Common myeloid progenitor, CD34-positive (primary cell): ENCODE measurements at regions of chr16 and their contacts with region 1.

Region 1: DNA sequence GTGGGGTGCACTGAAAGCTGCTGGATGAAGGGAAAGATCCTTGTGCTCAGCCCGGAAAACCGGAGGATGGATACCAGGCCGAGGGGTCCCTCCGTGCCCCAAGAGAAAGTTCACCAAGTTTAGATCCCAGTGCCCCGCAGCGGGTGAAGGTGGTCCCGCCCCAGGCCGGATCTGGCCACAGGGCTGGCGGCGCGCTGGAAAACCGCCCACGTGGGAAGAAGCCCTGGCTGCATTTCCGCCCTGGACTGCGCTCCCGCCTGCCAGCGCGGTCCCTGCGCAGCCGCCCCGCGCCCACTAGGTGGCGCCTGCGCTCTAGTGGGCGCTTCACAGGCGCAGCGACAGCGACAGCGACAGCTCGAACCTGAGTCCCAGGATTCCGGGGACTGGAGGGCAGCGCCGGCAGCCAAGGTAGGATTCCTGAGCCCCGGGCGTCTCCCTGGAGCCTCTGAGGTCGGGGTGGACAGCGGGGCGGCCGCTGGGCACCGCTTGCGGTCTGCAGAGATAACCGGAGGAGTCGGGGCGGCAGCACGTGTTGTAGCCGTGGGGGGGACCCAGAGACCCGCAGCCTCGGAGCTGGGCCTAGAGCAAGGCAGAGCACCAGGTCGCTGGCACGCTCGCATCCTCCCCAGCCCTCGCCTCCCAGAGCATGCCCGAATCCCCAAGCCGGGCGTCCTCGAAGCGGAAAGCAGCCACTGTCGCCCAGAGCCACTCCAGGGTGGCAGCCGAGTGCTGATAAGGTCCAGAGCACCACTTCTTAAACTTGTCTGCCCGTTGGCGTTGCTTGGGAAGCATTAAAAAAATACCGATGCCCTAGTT is at the start of gene CHD9:
- DNase-seq: peak; percentile 81 to 88 (median 88)
- H3K4me3 ChIP-seq: peak within 1 kb of the TSS; percentile 69 to 89 (median 84)
- H3K27ac ChIP-seq: peak within 1 kb of the TSS; percentile 40 to 81
- H3K4me1 ChIP-seq: peaks cover 3 to 39% (median 25%) of the 10 kb centered on the region in 4 experiments
- H3K27me3 ChIP-seq: no peaks in the 10 kb centered on the region

Region 2: GRCh38 chr16:52863000-52863399 is 191.9 kb before region 1 on chr16:
- CTCF ChIA-PET with region 1: no interaction called
- POLR2A ChIA-PET with region 1: no interaction called
- DNase-seq: no peak
- H3K4me3 ChIP-seq: no peak overlapping the region
- H3K27ac ChIP-seq: no peak overlapping the region
- H3K4me1 ChIP-seq: no peaks in the 10 kb centered on the region
- H3K27me3 ChIP-seq: no peaks in the 10 kb centered on the region

Region 3: GRCh38 chr16:53034306-53034705 is 20.6 kb before region 1 on chr16:
- CTCF ChIA-PET with region 1: no interaction called
- POLR2A ChIA-PET with region 1: no interaction called
- DNase-seq: no peak
- H3K4me3 ChIP-seq: no peak overlapping the region
- H3K27ac ChIP-seq: no peak overlapping the region
- H3K4me1 ChIP-seq: no peaks in the 10 kb centered on the region
- H3K27me3 ChIP-seq: no peaks in the 10 kb centered on the region

Region 4: DNA sequence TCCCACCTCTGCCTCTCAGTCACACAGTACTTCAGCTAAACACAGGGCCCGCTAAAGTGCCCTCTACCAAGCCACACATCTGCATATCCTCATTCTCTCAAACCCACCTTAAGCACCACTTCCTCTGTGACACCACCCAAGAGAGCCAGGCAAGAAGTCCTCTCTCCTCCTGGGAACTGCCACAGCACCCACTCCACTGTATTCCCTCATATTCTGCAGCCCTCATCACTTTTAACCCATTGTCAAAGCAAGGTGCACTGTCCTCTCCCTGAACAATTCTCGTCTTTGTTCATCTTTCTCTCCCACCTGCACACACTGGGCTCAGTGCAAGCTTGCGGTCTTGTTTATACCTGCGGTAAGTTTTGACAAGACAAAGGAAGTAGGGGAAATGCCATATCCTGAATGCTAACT is 13.6 kb after region 1 on chr16:
- CTCF ChIA-PET with region 1: interaction called, 13 read pairs
- POLR2A ChIA-PET with region 1: no interaction called
- DNase-seq: no peak
- H3K4me3 ChIP-seq: no peak overlapping the region
- H3K27ac ChIP-seq: no peak overlapping the region
- H3K4me1 ChIP-seq: peaks cover 4 to 47% (median 34%) of the 10 kb centered on the region in 4 experiments
- H3K27me3 ChIP-seq: no peaks in the 10 kb centered on the region

Region 5: DNA sequence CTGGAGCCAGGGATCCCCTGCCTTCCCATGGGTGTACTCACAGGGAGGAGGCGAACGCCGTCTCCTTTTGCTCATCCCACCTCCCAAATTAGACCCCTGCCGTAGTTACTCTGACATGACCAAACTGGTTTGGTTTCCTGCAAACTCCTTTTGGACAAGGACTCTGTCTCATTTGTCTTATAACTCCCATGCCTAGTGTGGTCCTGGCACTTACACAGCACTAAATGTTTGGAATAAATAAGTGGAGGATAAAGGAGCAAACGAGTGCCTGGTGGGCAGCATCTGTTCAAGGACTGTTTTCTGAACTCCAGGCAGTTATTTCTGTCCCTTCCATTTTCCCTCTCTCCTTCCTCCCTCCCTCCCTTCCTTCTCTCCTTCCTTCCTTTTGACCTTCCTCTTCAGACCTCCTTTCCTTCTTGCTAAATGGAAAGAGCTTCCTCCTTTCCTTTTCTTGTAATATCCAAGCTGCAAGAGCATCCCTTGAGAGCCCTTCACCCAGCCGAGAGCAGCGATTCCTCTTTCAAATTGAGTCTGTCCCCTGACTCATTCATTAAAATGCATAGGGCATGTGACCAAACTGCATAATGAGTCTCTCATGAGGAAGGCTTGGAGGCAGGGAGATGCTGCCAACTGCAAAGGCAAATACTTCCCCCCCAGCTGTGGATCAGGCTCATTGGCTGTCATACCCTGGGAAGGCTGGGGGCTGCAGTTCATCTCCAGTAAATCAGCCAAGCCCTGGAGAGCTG is 36.8 kb after region 1 on chr16:
- CTCF ChIA-PET with region 1: interaction called, 73 read pairs
- POLR2A ChIA-PET with region 1: interaction called, 7 read pairs
- DNase-seq: peak; percentile 33 to 82 (median 72)
- H3K4me3 ChIP-seq: peak overlapping the region in 3 of 7 experiments; percentile 44 to 63 (median 46)
- H3K27ac ChIP-seq: no peak overlapping the region
- H3K4me1 ChIP-seq: peaks cover 22 to 54% (median 47%) of the 10 kb centered on the region in 4 experiments
- H3K27me3 ChIP-seq: no peaks in the 10 kb centered on the region

Region 6: GRCh38 chr16:53130159-53131049 is 75.5 kb after region 1 on chr16:
- CTCF ChIA-PET with region 1: interaction called, 24 read pairs
- POLR2A ChIA-PET with region 1: interaction called, 3 read pairs
- DNase-seq: peak; percentile 95 to 98 (median 97)
- H3K4me3 ChIP-seq: peak overlapping the region; percentile 70 to 94 (median 89)
- H3K27ac ChIP-seq: peak overlapping the region; percentile 68 to 87
- H3K4me1 ChIP-seq: peaks cover 3 to 16% (median 12%) of the 10 kb centered on the region in 4 experiments
- H3K27me3 ChIP-seq: no peaks in the 10 kb centered on the region

Region 7: GRCh38 chr16:53207810-53208752 is 153.2 kb after region 1 on chr16:
- CTCF ChIA-PET with region 1: interaction called, 51 read pairs
- POLR2A ChIA-PET with region 1: no interaction called
- DNase-seq: peak; percentile 87 to 94 (median 91)
- H3K4me3 ChIP-seq: peak overlapping the region in 6 of 7 experiments; percentile 63 to 96 (median 74)
- H3K27ac ChIP-seq: peak overlapping the region; percentile 90 to 95
- H3K4me1 ChIP-seq: peaks cover 11 to 42% (median 28%) of the 10 kb centered on the region in 4 experiments
- H3K27me3 ChIP-seq: no peaks in the 10 kb centered on the region